ENCODE measurements at regions of chr2 and their contacts with region 1.

Region 1: GRCh38 chr2:27966483-27966882 is 76.0 kb downstream of the BABAM2 start:
- DNase-seq: no peak
- H3K4me3 Mint-ChIP-seq: peak overlapping the region; percentile 44
- H3K27ac Mint-ChIP-seq: peak overlapping the region; percentile 0
- H3K4me1 Mint-ChIP-seq: peaks cover 47% of the 10 kb centered on the region
- H3K27me3 Mint-ChIP-seq: no peaks in the 10 kb centered on the region

Region 2: DNA sequence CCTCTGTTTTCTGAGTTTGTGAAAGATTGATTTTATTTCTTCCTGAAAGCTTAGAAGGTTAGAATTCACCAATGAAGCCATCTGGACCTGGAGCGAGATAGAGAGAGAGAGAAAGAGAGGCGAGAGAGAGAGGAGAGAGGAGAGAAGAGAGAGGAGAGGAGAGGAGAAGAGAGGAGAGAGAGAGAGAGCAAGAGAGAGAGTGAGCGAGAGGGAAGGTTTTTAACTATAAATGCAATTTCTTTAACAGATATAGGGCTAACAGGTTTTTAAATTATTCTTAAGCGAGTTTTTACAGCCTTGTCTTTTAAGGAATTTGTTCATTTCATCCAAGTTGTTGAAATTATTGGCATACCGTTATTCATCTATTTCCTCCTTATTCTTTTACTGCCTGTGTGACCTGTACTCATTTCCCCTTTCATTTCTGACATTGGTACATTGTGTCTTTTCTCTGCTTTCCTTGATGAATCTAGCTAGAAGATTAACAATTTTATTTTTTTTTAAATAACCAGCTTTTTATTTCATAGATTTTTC is 19.9 kb before region 1 on chr2:
- intact Hi-C with region 1: no loop called
- DNase-seq: no peak
- H3K4me3 Mint-ChIP-seq: no peak overlapping the region
- H3K27ac Mint-ChIP-seq: no peak overlapping the region
- H3K4me1 Mint-ChIP-seq: peaks cover 19% of the 10 kb centered on the region
- H3K27me3 Mint-ChIP-seq: no peaks in the 10 kb centered on the region

Region 3: GRCh38 chr2:28004086-28004485 is 37.6 kb after region 1 on chr2:
- intact Hi-C with region 1: loop called (anchors 5 kb)
- DNase-seq: no peak
- H3K4me3 Mint-ChIP-seq: no peak overlapping the region
- H3K27ac Mint-ChIP-seq: peak overlapping the region; percentile 62
- H3K4me1 Mint-ChIP-seq: peaks cover 25% of the 10 kb centered on the region
- H3K27me3 Mint-ChIP-seq: no peaks in the 10 kb centered on the region

Region 4: GRCh38 chr2:28082131-28082530 is 115.6 kb after region 1 on chr2:
- intact Hi-C with region 1: no loop called
- DNase-seq: no peak
- H3K4me3 Mint-ChIP-seq: no peak overlapping the region
- H3K27ac Mint-ChIP-seq: no peak overlapping the region
- H3K4me1 Mint-ChIP-seq: peaks cover 19% of the 10 kb centered on the region
- H3K27me3 Mint-ChIP-seq: no peaks in the 10 kb centered on the region

Region 5: DNA sequence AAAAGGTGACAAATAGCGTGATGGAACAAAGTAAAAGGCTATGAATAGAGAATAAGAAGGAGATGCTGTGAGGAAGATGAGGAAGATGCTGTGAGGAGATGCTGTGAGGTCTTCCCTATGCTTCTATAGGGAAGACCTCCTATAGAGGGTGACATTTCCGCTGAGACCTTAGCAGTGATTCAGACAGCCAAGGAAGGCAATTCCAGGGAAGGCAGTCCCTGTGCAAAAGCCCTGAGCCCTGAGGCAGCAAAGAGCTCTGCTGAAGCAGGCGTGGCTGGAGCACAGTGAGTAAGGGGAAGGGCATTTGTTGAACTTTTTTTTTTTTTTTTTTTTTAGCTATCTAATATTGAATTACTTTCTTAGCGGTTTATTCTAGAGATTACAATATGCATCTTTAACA is 283.5 kb after region 1 on chr2:
- intact Hi-C with region 1: loop called (anchors 1 kb)
- DNase-seq: no peak
- H3K4me3 Mint-ChIP-seq: no peak overlapping the region
- H3K27ac Mint-ChIP-seq: no peak overlapping the region
- H3K4me1 Mint-ChIP-seq: peaks cover 43% of the 10 kb centered on the region
- H3K27me3 Mint-ChIP-seq: no peaks in the 10 kb centered on the region